ENCODE measurements at regions of chr5 and their contacts with region 1.

Region 1: DNA sequence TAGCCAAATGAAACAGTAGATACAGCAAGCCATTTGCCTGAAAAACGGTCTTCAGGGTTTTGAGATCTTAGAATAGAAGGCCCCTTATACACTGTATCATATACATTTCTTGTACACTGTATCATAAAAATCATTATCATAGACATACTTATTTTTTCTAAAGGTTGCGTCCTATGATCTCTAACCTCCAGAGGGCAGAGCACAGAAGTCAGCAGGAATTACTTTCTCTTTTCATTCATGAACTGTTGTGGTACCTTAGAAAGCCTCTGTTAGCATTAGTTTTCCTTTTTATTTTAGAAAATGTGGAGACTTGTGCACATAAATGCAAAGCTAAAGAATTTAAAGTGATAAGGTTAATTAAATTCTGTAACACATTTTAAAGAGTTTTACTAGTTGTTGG is 115.4 kb downstream of the OXCT1 start:
- DNase-seq: no peak
- H3K4me3 Mint-ChIP-seq: no peak overlapping the region
- H3K27ac Mint-ChIP-seq: no peak overlapping the region
- H3K4me1 Mint-ChIP-seq: peaks cover 27% of the 10 kb centered on the region
- H3K27me3 Mint-ChIP-seq: no peaks in the 10 kb centered on the region

Region 2: DNA sequence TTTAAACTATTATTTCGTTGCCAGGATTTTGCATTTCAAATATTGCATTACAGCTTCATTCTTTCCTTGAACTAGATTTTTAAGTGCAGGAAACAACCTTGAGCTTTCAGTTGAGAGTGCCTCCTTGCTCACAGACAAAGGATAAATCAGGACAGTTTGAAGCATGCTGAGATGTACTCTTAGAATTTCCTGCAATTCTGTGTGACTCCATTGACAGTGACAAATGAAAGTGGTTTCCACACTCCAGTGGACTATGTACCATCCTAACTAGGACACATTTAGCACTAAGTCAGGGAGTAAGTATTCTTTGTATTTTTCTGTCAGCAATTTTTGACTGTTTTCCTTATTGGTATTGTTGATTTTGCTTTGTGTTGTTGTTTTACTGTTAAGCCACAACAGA is 144.5 kb before region 1 on chr5:
- intact Hi-C with region 1: no loop called
- DNase-seq: no peak
- H3K4me3 Mint-ChIP-seq: no peak overlapping the region
- H3K27ac Mint-ChIP-seq: no peak overlapping the region
- H3K4me1 Mint-ChIP-seq: no peaks in the 10 kb centered on the region
- H3K27me3 Mint-ChIP-seq: no peaks in the 10 kb centered on the region

Region 3: DNA sequence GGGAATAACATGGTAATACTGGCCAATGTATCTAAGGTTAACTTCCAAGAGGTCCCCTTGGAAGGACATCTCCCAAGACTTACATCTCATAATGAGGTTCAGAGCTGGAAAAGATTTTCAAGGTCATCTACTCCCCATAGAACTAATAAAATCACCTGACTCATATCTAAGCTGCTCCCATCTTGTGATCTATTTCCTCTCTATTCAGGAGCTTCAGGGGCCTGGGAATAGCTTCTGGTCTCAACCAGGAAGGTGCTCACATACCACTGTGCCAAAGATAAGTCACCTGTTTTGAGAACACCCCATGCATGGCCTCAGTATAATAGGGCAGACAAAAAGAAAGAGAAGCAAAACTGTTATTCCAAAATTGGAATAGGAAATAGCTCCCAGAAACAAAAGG is 41.2 kb after region 1 on chr5:
- intact Hi-C with region 1: loop called (anchors 5 kb)
- DNase-seq: no peak
- H3K4me3 Mint-ChIP-seq: no peak overlapping the region
- H3K27ac Mint-ChIP-seq: peak overlapping the region; percentile 35
- H3K4me1 Mint-ChIP-seq: peaks cover 15% of the 10 kb centered on the region
- H3K27me3 Mint-ChIP-seq: no peaks in the 10 kb centered on the region

Measured in activated T-helper 2 cell treated with anti-CD3 and anti-CD28 coated beads, Interferon-gamma antibody, Interleukin-2, Interleukin-4, amounts not matched to agents 10 μg/mL and 5 μg/mL and 100 μg/mL, durations not matched to agents 14 hours and 24 hours and 36 hours (primary cell).